CD8-positive, alpha-beta memory T cell (primary cell): ENCODE measurements at regions of chr17 and their contacts with region 1.

Region 1: GRCh38 chr17:68205251-68205807 is 42.5 kb upstream of the AMZ2 start:
- DNase-seq: peak; percentile 88 to 92 (median 90)
- H3K4me3 ChIP-seq: peak overlapping the region; percentile 58
- H3K4me3 Mint-ChIP-seq: peak overlapping the region; percentile 87 to 97 (median 91)
- H3K27ac ChIP-seq: peak overlapping the region; percentile 69
- H3K27ac Mint-ChIP-seq: peak overlapping the region; percentile 84 to 96 (median 90)
- H3K4me1 ChIP-seq: peaks cover 14% of the 10 kb centered on the region
- H3K4me1 Mint-ChIP-seq: peaks cover 29 to 48% (median 32%) of the 10 kb centered on the region in 3 donors
- H3K27me3 ChIP-seq: no peaks in the 10 kb centered on the region
- H3K27me3 Mint-ChIP-seq: peaks cover 0 to 2% of the 10 kb centered on the region in 2 donors

Region 2: GRCh38 chr17:68141050-68141449 is 64.3 kb before region 1 on chr17:
- CTCF ChIA-PET with region 1: no interaction called
- POLR2A ChIA-PET with region 1: no interaction called
- DNase-seq: no peak
- H3K4me3 ChIP-seq: no peak overlapping the region
- H3K4me3 Mint-ChIP-seq: no peak overlapping the region
- H3K27ac ChIP-seq: no peak overlapping the region
- H3K27ac Mint-ChIP-seq: peak overlapping the region in 1 of 8 donors; percentile 25
- H3K4me1 ChIP-seq: no peaks in the 10 kb centered on the region
- H3K4me1 Mint-ChIP-seq: peaks cover 0 to 6% (median 0%) of the 10 kb centered on the region in 3 donors
- H3K27me3 ChIP-seq: no peaks in the 10 kb centered on the region
- H3K27me3 Mint-ChIP-seq: no peaks in the 10 kb centered on the region

Region 3: DNA sequence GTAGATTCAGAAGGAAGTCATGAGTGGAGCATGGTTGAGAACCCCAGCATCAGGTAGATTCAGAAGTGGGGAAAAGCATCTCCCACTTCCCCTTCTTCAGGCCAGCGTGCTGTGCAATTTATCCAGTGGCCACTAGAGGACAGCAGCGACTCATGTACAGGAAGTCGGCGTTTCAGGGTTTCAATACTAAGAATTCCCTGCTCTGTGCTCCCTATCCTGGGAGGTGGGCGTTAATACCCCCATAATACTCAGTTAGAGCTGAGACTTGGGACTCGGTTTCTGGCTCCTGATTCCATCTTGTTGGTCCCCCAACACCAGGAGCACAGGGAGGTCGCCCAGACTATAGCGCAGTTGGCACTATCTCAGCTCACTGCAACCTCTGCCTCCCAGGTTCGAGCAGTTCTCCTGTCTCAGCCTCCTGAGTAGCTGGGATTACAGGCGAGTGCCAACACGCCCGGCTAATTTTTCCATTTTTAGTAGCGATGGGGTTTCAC is 32.8 kb before region 1 on chr17:
- CTCF ChIA-PET with region 1: interaction called, 123 read pairs
- POLR2A ChIA-PET with region 1: interaction called, 7 read pairs
- DNase-seq: peak; percentile 61 to 82 (median 68)
- H3K4me3 ChIP-seq: no peak overlapping the region
- H3K4me3 Mint-ChIP-seq: no peak overlapping the region
- H3K27ac ChIP-seq: no peak overlapping the region
- H3K27ac Mint-ChIP-seq: no peak overlapping the region
- H3K4me1 ChIP-seq: peaks cover 7% of the 10 kb centered on the region
- H3K4me1 Mint-ChIP-seq: peaks cover 11 to 31% (median 19%) of the 10 kb centered on the region in 3 donors
- H3K27me3 ChIP-seq: no peaks in the 10 kb centered on the region
- H3K27me3 Mint-ChIP-seq: no peaks in the 10 kb centered on the region

Region 4: GRCh38 chr17:68184816-68185436 is 20.4 kb before region 1 on chr17:
- CTCF ChIA-PET with region 1: interaction called, 183 read pairs
- POLR2A ChIA-PET with region 1: interaction called, 171 read pairs
- DNase-seq: peak in 4 of 5 donors; percentile 52 to 78 (median 61)
- H3K4me3 ChIP-seq: peak overlapping the region; percentile 67
- H3K4me3 Mint-ChIP-seq: peak overlapping the region; percentile 79 to 98 (median 94)
- H3K27ac ChIP-seq: peak overlapping the region; percentile 18
- H3K27ac Mint-ChIP-seq: peak overlapping the region; percentile 91 to 97 (median 96)
- H3K4me1 ChIP-seq: peaks cover 49% of the 10 kb centered on the region
- H3K4me1 Mint-ChIP-seq: peaks cover 59 to 91% (median 79%) of the 10 kb centered on the region in 3 donors
- H3K27me3 ChIP-seq: no peaks in the 10 kb centered on the region
- H3K27me3 Mint-ChIP-seq: no peaks in the 10 kb centered on the region

Region 5: DNA sequence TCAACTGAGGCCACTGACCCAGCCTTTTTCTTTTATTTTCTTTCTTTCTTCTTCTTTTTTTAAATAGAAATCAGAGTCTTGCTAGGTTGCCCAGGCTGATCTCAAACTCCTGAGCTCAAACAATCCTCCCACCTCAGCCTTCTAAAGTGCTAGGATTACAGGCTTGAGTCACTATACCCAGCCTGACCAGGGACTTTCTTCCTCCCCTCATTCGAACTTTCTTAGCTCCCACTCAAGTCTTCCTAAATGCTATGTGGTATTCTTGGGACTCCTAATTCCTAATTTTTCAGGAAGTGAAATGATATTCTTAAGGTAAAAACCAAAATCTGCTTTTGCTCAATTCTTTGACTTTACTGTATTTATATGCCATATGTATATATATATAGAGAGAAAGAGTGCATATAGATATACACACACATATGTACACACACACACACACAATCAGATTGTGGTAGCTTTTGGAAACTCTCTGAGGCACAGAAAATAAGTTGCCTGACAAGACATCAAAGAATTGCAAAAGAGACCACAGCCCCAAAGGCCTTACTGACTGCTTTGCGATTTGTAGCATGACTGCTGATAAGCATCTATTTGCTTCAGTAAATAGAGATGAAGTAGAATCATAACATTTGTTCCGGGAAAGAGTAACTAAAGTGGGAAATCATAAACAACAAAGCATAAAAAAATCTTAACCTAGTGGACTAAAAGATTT is 33.0 kb after region 1 on chr17:
- CTCF ChIA-PET with region 1: interaction called, 9 read pairs
- POLR2A ChIA-PET with region 1: interaction called, 18 read pairs
- DNase-seq: peak in 3 of 5 donors; percentile 22 to 66 (median 45)
- H3K4me3 ChIP-seq: peak overlapping the region; percentile 42
- H3K4me3 Mint-ChIP-seq: peak overlapping the region; percentile 58 to 91 (median 86)
- H3K27ac ChIP-seq: peak overlapping the region; percentile 82
- H3K27ac Mint-ChIP-seq: peak overlapping the region; percentile 93 to 100 (median 99)
- H3K4me1 ChIP-seq: peaks cover 54% of the 10 kb centered on the region
- H3K4me1 Mint-ChIP-seq: peaks cover 53 to 75% (median 71%) of the 10 kb centered on the region in 3 donors
- H3K27me3 ChIP-seq: no peaks in the 10 kb centered on the region
- H3K27me3 Mint-ChIP-seq: no peaks in the 10 kb centered on the region

Region 6: DNA sequence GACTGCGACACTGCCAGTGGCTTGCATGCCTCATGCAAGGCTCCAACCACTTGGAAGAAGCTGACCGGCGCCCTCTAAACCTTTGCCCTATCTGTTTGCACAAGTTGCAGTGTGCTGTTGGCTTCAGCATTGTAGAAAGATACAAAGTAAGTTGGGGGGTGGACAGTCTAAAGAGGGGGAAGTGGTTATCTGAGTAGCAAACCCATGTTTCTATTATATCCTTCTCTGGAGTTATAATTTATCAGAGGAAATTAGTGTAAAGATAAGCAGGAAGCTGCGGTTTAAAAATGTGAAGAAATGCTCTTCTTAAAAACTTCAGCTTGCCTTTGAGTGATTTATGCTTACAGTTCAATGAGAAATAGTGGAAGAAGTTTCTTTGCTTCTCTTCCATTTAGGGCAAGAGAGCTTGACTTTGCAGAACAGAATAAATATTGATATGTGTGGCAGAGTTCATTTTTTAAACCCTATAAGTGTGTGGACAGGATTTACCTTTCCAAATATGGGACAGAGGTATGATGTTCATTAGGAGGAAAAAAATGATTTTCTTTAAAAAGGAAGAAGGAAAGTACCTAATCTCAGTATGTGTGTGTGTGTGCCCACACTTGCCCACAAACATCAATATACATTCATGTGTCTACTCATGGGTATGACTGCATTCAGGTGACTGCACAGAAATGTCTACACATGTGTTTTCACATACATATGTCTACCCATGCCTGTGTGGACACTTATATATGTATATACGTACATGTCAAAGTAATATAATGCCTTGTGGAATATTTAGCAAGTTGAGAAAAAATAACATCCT is 50.6 kb after region 1 on chr17:
- CTCF ChIA-PET with region 1: interaction called, 14 read pairs
- POLR2A ChIA-PET with region 1: interaction called, 4 read pairs
- DNase-seq: peak in 1 of 5 donors; percentile 58
- H3K4me3 ChIP-seq: peak overlapping the region; percentile 38
- H3K4me3 Mint-ChIP-seq: peak overlapping the region; percentile 60 to 82 (median 70)
- H3K27ac ChIP-seq: peak overlapping the region; percentile 27
- H3K27ac Mint-ChIP-seq: peak overlapping the region; percentile 85 to 99 (median 98)
- H3K4me1 ChIP-seq: peaks cover 84% of the 10 kb centered on the region
- H3K4me1 Mint-ChIP-seq: peaks cover 75 to 92% (median 82%) of the 10 kb centered on the region in 3 donors
- H3K27me3 ChIP-seq: no peaks in the 10 kb centered on the region
- H3K27me3 Mint-ChIP-seq: no peaks in the 10 kb centered on the region

Region 7: DNA sequence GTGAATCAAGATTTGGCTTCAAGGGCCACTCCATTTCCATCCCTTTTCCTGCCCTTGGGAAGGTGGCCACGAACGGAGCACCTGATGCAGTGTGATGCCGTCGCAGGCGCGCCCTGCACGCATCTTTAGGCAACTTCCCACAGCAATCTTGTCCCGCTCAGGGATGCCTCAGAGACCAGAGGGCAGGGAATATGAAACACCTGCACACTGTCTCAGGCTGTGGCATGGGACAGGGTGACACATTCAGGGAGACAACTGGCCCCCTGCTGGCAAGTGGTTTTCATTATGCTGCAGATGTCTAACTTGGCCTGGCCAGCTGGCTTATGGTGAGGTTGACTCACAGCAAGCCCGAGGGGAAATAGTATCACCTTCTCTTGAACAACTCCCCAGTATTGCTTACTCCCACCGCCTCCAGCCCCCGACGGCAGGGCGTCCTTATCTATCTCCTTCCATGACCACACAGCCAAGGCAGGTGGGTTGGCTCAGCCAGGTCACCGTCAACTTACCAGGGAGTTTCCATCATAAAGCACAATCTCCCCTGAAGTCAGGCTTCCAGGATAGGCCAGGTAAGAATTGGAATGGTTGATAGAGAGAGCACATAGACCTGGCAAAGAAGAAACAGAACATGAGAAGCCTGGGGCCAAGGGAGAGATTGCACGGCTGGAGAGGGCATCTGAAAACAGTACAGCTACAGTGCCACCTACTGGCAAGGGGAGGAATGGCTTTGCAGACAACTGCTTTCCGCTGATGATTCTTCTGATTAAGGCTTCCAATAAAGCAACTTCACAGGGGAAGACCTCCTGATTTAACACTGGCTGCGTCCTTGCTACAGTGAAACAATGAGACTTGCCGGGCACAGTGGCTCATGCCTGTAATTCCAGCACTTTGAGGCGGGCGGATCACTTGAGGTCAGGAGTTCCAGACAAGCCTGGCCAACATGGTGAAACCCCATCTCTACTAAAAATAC is 230.8 kb after region 1 on chr17:
- CTCF ChIA-PET with region 1: interaction called, 13 read pairs
- POLR2A ChIA-PET with region 1: interaction called, 10 read pairs
- DNase-seq: peak; percentile 71 to 87 (median 77)
- H3K4me3 ChIP-seq: no peak overlapping the region
- H3K4me3 Mint-ChIP-seq: peak overlapping the region; percentile 33 to 85 (median 68)
- H3K27ac ChIP-seq: no peak overlapping the region
- H3K27ac Mint-ChIP-seq: peak overlapping the region; percentile 81 to 98 (median 92)
- H3K4me1 ChIP-seq: peaks cover 35% of the 10 kb centered on the region
- H3K4me1 Mint-ChIP-seq: peaks cover 33 to 60% (median 51%) of the 10 kb centered on the region in 3 donors
- H3K27me3 ChIP-seq: no peaks in the 10 kb centered on the region
- H3K27me3 Mint-ChIP-seq: no peaks in the 10 kb centered on the region